Astrocyte of the cerebellum (primary cell): ENCODE measurements at regions of chr16 and their contacts with region 1.

Region 1: GRCh38 chr16:3611146-3611975 is at the start of gene SLX4:
- DNase-seq: peak; percentile 63
- H3K4me3 ChIP-seq: peak within 1 kb of the TSS; percentile 80
- CTCF ChIP-seq: no peak

Region 2: DNA sequence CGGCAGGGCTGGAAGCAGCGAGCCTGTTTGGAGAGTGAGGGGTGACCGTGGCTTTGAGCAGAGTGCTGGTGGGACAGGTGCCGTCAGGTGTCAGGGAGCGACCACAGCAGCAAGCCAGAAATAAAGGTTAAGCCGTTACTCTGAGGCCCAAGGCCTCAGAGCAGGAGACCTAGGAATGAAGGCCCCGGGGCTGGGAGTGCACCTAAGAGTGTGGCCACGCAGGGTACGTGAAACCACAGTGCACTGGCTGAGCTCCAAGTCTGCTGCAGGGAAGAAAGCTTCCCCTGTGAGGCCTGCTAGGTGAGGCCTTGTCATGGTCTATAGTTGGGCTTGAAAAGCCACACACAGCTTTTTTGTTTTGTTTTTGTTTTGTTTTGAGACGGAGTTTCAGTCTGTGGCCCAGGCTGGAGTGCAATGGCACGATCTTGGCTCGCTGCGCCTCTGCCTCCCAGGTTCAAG is 101.9 kb before region 1 on chr16:
- in situ Hi-C with region 1: loop called (anchors 5 kb)
- DNase-seq: peak; percentile 15
- H3K4me3 ChIP-seq: no peak overlapping the region
- CTCF ChIP-seq: no peak

Region 3: GRCh38 chr16:3553138-3553923 is 58.0 kb before region 1 on chr16:
- in situ Hi-C with region 1: no loop called
- DNase-seq: no peak
- H3K4me3 ChIP-seq: no peak overlapping the region
- CTCF ChIP-seq: no peak

Region 4: DNA sequence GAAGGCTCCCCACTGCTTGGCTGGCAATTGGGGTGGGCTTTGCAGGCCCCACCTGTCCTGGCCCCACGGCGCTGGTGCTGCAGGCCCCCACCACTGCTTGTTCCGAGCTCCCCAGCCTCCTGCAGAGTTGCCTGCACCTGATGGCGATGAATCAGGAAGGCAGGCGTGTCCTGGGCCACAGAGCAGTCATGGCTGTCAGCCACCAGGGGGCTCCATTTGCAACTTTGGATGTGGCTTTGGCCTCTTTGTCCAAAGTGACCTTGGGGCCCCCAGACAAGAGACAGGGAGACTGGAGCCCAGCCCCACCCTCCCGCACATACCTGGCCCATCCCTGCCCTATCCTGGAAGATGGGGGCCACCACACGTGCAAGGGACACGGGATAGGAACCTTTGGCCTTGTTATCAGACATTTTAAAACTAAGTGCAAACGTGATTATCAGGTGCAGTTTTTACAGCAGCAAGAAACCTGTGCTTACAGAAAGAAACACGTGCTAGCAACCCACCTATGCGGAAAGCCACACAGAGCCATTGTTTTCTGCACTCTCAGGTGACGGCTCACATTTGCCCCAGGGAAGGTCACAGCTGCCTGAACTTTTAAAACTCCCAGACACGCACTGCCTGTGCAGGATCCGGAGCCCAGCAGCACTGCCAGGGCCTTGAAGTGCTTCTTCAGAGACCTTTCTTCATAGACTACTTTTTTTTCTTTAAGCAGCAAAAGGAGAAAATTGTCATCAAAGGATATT is 43.1 kb after region 1 on chr16 and contains the start of gene DNASE1:
- in situ Hi-C with region 1: no loop called
- DNase-seq: peak; percentile 16
- H3K4me3 ChIP-seq: no peak within 1 kb of the TSS
- CTCF ChIP-seq: peak; percentile 61

Region 5: DNA sequence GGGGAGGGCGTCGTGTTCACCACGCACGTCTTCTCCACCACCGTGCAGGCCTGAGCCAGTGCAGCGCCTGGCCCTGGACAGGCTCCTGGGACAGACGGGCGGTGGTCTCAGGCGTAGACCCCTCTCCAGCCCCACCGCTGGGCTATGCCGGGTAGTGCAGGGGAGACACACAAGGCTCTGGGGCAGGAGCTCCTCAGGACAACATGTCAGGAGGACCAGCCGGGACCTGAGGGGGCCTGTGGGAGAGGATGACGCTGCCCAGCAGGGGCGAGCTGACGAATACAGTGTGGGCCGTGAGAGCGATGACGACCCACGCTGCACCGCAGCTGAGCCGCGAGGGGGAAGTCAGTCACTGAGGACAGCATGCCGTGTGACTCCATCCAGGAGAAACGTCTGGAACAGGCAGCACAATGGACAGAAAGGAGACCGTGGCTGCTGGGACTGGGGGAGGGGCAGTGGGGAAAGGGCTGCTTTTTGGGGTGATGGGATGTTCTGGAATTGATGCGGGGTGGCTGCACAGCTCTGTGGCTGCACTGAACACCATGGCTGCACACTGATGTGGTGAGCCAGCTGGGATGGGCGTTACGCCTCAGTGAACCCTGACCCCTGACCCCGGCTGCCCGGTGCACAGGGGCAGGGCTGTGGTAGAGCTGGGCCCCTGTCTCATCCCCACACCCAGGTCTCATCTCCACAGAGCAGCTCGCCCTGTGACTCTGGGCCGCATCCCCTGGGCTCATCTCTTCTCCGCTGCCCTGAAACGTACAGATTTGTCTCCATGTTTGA is 63.3 kb after region 1 on chr16:
- in situ Hi-C with region 1: loop called (anchors 5 kb)
- DNase-seq: no peak
- H3K4me3 ChIP-seq: no peak overlapping the region
- CTCF ChIP-seq: no peak

Region 6: GRCh38 chr16:3690470-3690928 is 79.1 kb after region 1 on chr16:
- in situ Hi-C with region 1: no loop called
- DNase-seq: peak; percentile 80
- H3K4me3 ChIP-seq: no peak overlapping the region
- CTCF ChIP-seq: peak; percentile 93